Activated T-helper 1 cell treated with anti-CD3 and anti-CD28 coated beads, Interleukin-12 subunit alpha, Interleukin-12 subunit beta, Interleukin-2, Interleukin-4 antibody, amounts not matched to agents 30 ng/mL and 10 ng/mL and 1 ng/mL, durations not matched to agents 14 hours and 24 hours and 36 hours (primary cell): ENCODE measurements at regions of chr10 and their contacts with region 1.

Region 1: GRCh38 chr10:91298224-91298871 is 77.9 kb downstream of the PCGF5 start:
- DNase-seq: peak; percentile 68
- H3K4me3 Mint-ChIP-seq: peak overlapping the region; percentile 62
- H3K27ac Mint-ChIP-seq: no peak overlapping the region
- H3K4me1 Mint-ChIP-seq: peaks cover 9% of the 10 kb centered on the region
- H3K27me3 Mint-ChIP-seq: peaks cover 14% of the 10 kb centered on the region

Region 2: GRCh38 chr10:90912174-90912573 is 386.2 kb before region 1 on chr10:
- intact Hi-C with region 1: loop called (anchors 5 kb)
- DNase-seq: no peak
- H3K4me3 Mint-ChIP-seq: no peak overlapping the region
- H3K27ac Mint-ChIP-seq: no peak overlapping the region
- H3K4me1 Mint-ChIP-seq: no peaks in the 10 kb centered on the region
- H3K27me3 Mint-ChIP-seq: peaks cover 4% of the 10 kb centered on the region

Region 3: DNA sequence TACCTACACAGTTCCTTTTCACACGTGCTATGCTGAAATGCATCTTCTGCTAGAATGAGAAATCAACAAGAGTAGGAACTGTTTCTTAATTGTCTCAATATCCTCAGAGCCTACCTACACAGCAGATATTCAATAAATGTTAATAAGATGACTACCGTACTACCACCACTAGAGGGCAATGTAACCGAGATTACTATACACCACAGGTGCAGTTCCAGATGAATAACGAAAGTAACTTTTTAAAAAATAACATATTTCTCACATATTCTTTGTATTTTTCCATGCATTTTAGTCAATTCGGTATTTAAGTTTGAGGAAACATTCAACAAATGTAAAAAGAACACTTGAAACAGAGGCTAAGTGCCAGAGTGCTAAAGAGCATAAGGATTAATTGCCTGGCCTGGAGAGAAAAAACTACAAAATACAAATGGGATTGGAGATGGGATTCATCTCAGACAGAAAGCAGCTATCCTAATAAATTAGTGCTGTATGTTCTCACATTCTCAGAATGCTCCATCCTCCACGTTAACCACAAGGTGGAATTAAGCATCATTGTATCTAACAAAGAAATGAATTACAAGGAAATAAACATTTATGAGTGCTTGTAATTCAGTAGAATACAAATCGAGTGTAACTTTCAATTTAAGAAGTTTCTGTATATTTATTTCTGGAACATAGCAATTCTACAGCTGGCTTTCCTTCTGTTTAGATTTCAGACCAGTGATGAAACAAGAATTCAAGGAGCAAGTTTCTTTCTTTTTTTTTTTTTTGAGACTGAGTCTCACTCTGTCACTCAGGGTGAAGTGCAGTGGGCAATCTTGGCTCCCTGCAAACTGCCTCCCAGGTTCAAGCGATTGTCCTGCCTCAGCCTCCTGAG is 91.5 kb after region 1 on chr10:
- intact Hi-C with region 1: loop called (anchors 1 kb)
- DNase-seq: no peak
- H3K4me3 Mint-ChIP-seq: no peak overlapping the region
- H3K27ac Mint-ChIP-seq: no peak overlapping the region
- H3K4me1 Mint-ChIP-seq: peaks cover 7% of the 10 kb centered on the region
- H3K27me3 Mint-ChIP-seq: peaks cover 16% of the 10 kb centered on the region

Region 4: GRCh38 chr10:91632671-91633550 is 334.6 kb after region 1 on chr10 and contains the start of gene PPP1R3C:
- intact Hi-C with region 1: loop called (anchors 1 kb)
- DNase-seq: peak; percentile 46
- H3K4me3 Mint-ChIP-seq: peak within 1 kb of the TSS; percentile 73
- H3K27ac Mint-ChIP-seq: no peak within 1 kb of the TSS
- H3K4me1 Mint-ChIP-seq: no peaks in the 10 kb centered on the region
- H3K27me3 Mint-ChIP-seq: peaks cover 49% of the 10 kb centered on the region
- total RNA-seq, gene PPP1R3C: not detected in 2 replicates

Region 5: GRCh38 chr10:91758303-91759146 is 460.2 kb after region 1 on chr10:
- intact Hi-C with region 1: loop called (anchors 2 kb)
- DNase-seq: no peak
- H3K4me3 Mint-ChIP-seq: no peak overlapping the region
- H3K27ac Mint-ChIP-seq: no peak overlapping the region
- H3K4me1 Mint-ChIP-seq: no peaks in the 10 kb centered on the region
- H3K27me3 Mint-ChIP-seq: peaks cover 37% of the 10 kb centered on the region